GM12878 (cell line): ENCODE measurements at regions of chr5 and their contacts with region 1.

Region 1: DNA sequence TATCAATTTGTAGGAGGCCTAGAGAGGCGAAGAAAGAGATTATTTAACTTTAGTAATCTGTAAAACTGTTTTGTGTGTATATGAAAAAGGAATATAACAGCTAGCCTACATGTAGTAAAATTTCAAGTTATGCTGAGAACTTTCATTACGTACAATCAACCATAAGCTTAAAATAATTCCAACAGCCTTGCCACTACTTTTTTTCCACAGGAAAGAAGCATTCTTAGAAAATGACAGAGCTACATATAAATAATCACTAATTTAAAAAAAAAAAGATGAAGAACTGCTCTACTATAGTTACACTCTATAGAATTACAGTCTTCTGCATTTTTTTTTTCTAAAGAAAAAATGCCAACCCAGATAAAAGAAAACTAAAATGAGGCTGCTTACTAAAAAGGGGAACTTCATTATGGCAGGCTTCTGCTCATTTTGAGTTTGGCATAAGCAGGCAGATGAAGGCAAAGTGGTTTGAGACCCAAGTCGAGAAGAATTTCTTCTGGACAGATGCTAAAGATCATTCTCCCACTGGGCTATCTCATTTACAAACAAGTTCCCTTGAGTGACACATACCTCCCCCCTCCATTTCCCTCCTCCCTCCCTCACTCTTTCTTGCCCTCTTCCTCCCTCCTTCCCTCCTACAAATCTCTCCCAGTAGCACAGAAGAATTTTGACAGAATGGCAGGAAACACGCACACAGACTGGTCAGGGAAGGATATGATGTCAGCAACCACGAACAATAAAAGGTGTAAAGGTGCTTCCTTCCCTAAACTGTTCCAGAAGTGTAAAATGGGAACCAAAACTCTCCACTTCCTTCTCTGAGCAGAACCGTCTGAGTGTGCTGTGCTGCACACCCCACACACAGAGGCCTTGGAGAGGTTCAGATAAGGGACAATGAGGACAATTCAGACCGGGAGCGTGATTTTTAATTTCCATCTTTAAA is 56.1 kb downstream of the MEF2C start:
- DNase-seq: peak; percentile 98
- ATAC-seq: peak; percentile 63
- H3K4me3 ChIP-seq: peak overlapping the region; percentile 64; the same call in 1 of the 2 replicates
- H3K27ac ChIP-seq: peak overlapping the region; percentile 80
- H3K4me1 ChIP-seq: peaks cover 23% of the 10 kb centered on the region
- H3K27me3 ChIP-seq: no peaks in the 10 kb centered on the region
- CTCF ChIP-seq: no peak
- EP300 ChIP-seq: peak; percentile 95 to 96
- POLR2A ChIP-seq: peak; percentile 52; the same call in 1 of the 2 replicates
- RAD21 ChIP-seq: no peak

Region 2: GRCh38 chr5:88808153-88808552 is 18.8 kb before region 1 on chr5:
- CTCF ChIA-PET with region 1: interaction called, 14 read pairs
- POLR2A ChIA-PET with region 1: interaction called, 4 read pairs
- RAD21 ChIA-PET with region 1: interaction called, 49 read pairs
- SMC1A ChIA-PET with region 1: interaction called, 31 read pairs
- in situ Hi-C with region 1: no loop called
- intact Hi-C with region 1: no loop called
- DNase-seq: no peak
- ATAC-seq: peak; percentile 59
- H3K4me3 ChIP-seq: no peak overlapping the region
- H3K27ac ChIP-seq: no peak overlapping the region
- H3K4me1 ChIP-seq: peaks cover 12% of the 10 kb centered on the region
- H3K27me3 ChIP-seq: no peaks in the 10 kb centered on the region
- CTCF ChIP-seq: no peak
- EP300 ChIP-seq: no peak
- POLR2A ChIP-seq: no peak
- RAD21 ChIP-seq: no peak

Region 3: DNA sequence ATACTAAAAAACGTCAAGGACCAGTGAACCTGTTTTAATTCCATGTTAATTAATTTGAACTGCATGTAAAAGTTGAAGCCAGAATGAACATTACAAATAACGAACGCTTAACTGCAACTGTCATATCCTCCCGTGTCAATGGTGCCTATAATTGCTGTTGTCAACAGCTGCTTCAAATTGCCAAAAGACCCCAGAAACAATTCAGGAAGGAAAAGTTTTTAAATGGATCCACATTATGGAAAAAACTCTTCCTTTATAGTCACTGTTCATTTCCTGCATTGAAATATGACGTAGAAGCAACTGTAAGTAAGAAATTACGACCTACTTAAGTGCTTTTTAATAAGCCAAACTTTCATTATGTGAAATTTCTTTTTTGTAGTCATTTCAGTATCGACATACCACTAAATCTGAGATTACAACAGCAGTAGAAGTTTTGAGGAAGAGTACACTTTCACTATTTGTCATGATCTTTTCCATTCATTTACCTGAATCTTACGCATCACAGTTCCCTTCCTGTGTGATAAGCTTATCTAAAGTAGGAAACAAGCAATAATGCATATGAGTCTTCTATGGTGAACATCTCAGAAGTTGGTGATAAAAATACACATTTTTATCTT is 18.3 kb after region 1 on chr5:
- CTCF ChIA-PET with region 1: interaction called, 12 read pairs
- POLR2A ChIA-PET with region 1: interaction called, 3 read pairs
- RAD21 ChIA-PET with region 1: interaction called, 3 read pairs
- SMC1A ChIA-PET with region 1: interaction called, 5 read pairs
- in situ Hi-C with region 1: no loop called
- intact Hi-C with region 1: no loop called
- DNase-seq: peak; percentile 73
- ATAC-seq: peak; percentile 82
- H3K4me3 ChIP-seq: no peak overlapping the region
- H3K27ac ChIP-seq: peak overlapping the region; percentile 56
- H3K4me1 ChIP-seq: peaks cover 3% of the 10 kb centered on the region; the same call in 1 of the 2 replicates
- H3K27me3 ChIP-seq: no peaks in the 10 kb centered on the region
- CTCF ChIP-seq: no peak
- EP300 ChIP-seq: peak; percentile 77 to 98
- POLR2A ChIP-seq: no peak
- RAD21 ChIP-seq: no peak

Region 4: DNA sequence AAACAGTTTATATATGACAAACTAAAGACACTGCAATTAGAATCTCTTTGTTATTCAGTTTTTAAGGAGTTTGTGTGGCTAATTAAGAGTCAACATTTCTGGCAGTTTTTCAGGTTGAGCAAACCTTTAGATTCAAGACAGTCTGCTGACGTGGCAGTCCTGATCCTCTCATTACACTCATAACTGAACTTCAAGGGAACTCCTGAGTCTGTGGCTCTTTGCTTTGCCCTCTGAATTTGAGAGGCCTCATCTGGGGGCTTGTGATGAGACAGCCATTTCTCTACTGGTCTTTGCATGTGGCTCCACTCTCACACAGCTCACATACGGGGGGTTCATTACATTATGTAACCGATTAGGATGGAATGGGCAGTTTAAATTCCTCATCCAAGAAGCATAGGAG is 239.0 kb after region 1 on chr5:
- CTCF ChIA-PET with region 1: no interaction called
- POLR2A ChIA-PET with region 1: interaction called, 3 read pairs
- RAD21 ChIA-PET with region 1: interaction called, 5 read pairs
- SMC1A ChIA-PET with region 1: interaction called, 4 read pairs
- in situ Hi-C with region 1: no loop called
- intact Hi-C with region 1: loop called (anchors 5 kb)
- DNase-seq: peak; percentile 65
- ATAC-seq: peak; percentile 92
- H3K4me3 ChIP-seq: no peak overlapping the region
- H3K27ac ChIP-seq: peak overlapping the region; percentile 83
- H3K4me1 ChIP-seq: peaks cover 10% of the 10 kb centered on the region
- H3K27me3 ChIP-seq: no peaks in the 10 kb centered on the region
- CTCF ChIP-seq: no peak
- EP300 ChIP-seq: peak; percentile 56 to 68; a peak in 2 of 4 replicates
- POLR2A ChIP-seq: 0 out of 2 replicates have a peak, but pooled peaks have one; percentile 19
- RAD21 ChIP-seq: peak; percentile 27; the same call in 1 of the 2 replicates

Region 5: DNA sequence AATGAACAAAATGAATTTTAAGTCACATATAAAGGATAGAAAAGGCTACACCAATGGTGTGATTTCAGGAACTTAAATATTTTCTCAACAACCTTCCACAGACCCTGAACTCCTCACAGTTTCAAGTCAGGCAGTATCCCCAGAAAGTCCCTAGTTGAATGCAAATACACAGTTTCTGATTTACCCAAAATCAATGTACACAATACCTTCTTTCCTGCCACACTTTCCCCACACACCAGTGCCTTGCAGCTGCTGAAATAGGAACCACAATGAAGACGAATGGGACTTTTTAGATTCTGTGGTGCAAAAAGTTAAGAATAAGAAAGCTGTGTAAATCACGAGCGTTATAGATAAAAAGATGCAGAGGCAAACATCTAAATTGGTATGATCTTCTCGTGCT is 608.4 kb after region 1 on chr5:
- CTCF ChIA-PET with region 1: no interaction called
- POLR2A ChIA-PET with region 1: no interaction called
- RAD21 ChIA-PET with region 1: interaction called, 6 read pairs
- SMC1A ChIA-PET with region 1: interaction called, 3 read pairs
- in situ Hi-C with region 1: no loop called
- intact Hi-C with region 1: loop called (anchors 5 kb)
- DNase-seq: peak; percentile 90
- ATAC-seq: peak; percentile 88
- H3K4me3 ChIP-seq: 0 out of 2 replicates have a peak overlapping the region, but pooled peaks have one; percentile 41
- H3K27ac ChIP-seq: peak overlapping the region; percentile 92
- H3K4me1 ChIP-seq: peaks cover 29% of the 10 kb centered on the region; the same call in 1 of the 2 replicates
- H3K27me3 ChIP-seq: no peaks in the 10 kb centered on the region
- CTCF ChIP-seq: 0 out of 6 replicates have a peak, but pooled peaks of 1 of the 3 experiments have one; percentile 3
- EP300 ChIP-seq: peak; percentile 50 to 87; a peak in 2 of 4 replicates
- POLR2A ChIP-seq: 0 out of 2 replicates have a peak, but pooled peaks have one; percentile 28
- RAD21 ChIP-seq: peak; percentile 53